Heart right ventricle (tissue), 16 donors: ENCODE measurements at regions of chr4 and their contacts with region 1.

Region 1: GRCh38 chr4:18021722-18022571 is at the start of gene LCORL:
- DNase-seq: peak; percentile 90 to 93
- ATAC-seq: peak; percentile 91 to 97 (median 96)
- H3K4me3 ChIP-seq: peak within 1 kb of the TSS; percentile 74 to 98 (median 91)
- H3K27ac ChIP-seq: peak within 1 kb of the TSS; percentile 87 to 98 (median 94)
- H3K4me1 ChIP-seq: peaks cover 0 to 20% (median 14%) of the 10 kb centered on the region in 9 donors
- H3K27me3 ChIP-seq: no peaks in the 10 kb centered on the region
- CTCF ChIP-seq: peak in 4 of 9 donors; percentile 14 to 23 (median 20)
- total RNA-seq, gene LCORL: 4.1 to 11.1 (median 7.2) TPM

Region 2: GRCh38 chr4:17823871-17824669 is 197.9 kb before region 1 on chr4:
- intact Hi-C with region 1: loop called in 2 of 10 experiments (anchors 10 kb)
- DNase-seq: no peak
- ATAC-seq: no peak
- H3K4me3 ChIP-seq: no peak overlapping the region
- H3K27ac ChIP-seq: no peak overlapping the region
- H3K4me1 ChIP-seq: no peaks in the 10 kb centered on the region
- H3K27me3 ChIP-seq: no peaks in the 10 kb centered on the region
- CTCF ChIP-seq: no peak

Region 3: DNA sequence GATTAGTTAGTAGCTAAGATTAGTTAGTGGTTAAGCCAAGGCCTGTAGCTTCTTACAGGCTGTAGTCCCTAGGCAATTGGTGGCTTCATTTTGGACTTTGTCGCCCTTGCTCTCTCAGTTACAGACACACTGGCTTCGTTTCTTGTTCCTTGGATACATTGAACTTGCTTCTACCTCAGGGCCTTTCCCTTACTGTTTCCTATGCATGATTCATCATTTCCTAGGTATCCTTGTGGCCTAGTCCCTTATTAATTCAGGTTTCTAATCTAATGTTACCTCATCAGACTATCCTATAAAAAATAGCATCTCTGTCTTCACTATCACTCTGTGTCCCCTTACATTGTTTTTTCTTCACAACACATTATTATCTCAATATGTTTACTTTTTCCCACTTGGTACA is 45.1 kb after region 1 on chr4:
- intact Hi-C with region 1: no loop called
- DNase-seq: no peak
- ATAC-seq: no peak
- H3K4me3 ChIP-seq: no peak overlapping the region
- H3K27ac ChIP-seq: no peak overlapping the region
- H3K4me1 ChIP-seq: peaks cover 0 to 5% (median 0%) of the 10 kb centered on the region in 9 donors
- H3K27me3 ChIP-seq: peaks cover 0 to 4% (median 0%) of the 10 kb centered on the region in 7 donors
- CTCF ChIP-seq: no peak

Region 4: GRCh38 chr4:18209448-18209847 is 187.5 kb after region 1 on chr4:
- intact Hi-C with region 1: no loop called
- DNase-seq: no peak
- ATAC-seq: no peak
- H3K4me3 ChIP-seq: no peak overlapping the region
- H3K27ac ChIP-seq: no peak overlapping the region
- H3K4me1 ChIP-seq: no peaks in the 10 kb centered on the region
- H3K27me3 ChIP-seq: no peaks in the 10 kb centered on the region
- CTCF ChIP-seq: no peak